K562 (cell line): ENCODE measurements at regions of chr1 and their contacts with region 1.

Region 1: DNA sequence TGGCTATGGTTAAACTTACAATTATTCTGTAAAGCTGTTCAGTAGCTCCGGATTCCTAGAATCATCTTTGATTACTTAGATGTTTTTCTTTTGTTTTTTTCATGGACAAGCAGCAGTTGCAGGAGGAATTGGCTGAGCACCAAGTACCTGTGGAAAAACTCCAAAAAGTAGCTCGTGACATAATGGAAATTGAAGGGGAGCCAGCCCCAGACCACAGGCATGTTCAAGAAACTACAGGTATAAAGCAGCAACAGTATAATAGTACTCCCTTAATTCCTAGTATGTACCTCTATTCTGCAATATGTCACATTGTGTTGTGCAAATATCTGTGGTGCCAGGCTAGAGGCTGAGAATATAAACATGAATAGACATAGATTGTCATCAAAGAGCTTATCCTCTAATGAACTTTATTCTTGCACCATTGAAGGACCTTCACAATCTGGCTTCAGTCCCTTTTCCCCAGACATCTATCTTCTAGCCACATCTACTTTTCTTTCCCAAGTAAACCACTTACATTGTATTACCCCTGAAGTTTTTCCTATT is 132.3 kb upstream of the BMP8A start:
- DNase-seq: no peak
- ATAC-seq: no peak
- H3K4me3 ChIP-seq: no peak overlapping the region
- H3K27ac ChIP-seq: no peak overlapping the region
- H3K4me1 ChIP-seq: no peaks in the 10 kb centered on the region
- H3K27me3 ChIP-seq: no peaks in the 10 kb centered on the region
- CTCF ChIP-seq: no peak
- EP300 ChIP-seq: no peak
- POLR2A ChIP-seq: no peak
- RAD21 ChIP-seq: no peak

Region 2: GRCh38 chr1:39370602-39371001 is 11.5 kb after region 1 on chr1:
- CTCF ChIA-PET with region 1: no interaction called
- POLR2A ChIA-PET with region 1: interaction called, 11 read pairs
- in situ Hi-C with region 1: no loop called
- intact Hi-C with region 1: no loop called
- DNase-seq: no peak
- ATAC-seq: no peak
- H3K4me3 ChIP-seq: no peak overlapping the region
- H3K27ac ChIP-seq: no peak overlapping the region
- H3K4me1 ChIP-seq: no peaks in the 10 kb centered on the region
- H3K27me3 ChIP-seq: no peaks in the 10 kb centered on the region
- CTCF ChIP-seq: no peak
- EP300 ChIP-seq: no peak
- POLR2A ChIP-seq: no peak
- RAD21 ChIP-seq: no peak